ENCODE measurements at regions of chr2 and their contacts with region 1.

Region 1: DNA sequence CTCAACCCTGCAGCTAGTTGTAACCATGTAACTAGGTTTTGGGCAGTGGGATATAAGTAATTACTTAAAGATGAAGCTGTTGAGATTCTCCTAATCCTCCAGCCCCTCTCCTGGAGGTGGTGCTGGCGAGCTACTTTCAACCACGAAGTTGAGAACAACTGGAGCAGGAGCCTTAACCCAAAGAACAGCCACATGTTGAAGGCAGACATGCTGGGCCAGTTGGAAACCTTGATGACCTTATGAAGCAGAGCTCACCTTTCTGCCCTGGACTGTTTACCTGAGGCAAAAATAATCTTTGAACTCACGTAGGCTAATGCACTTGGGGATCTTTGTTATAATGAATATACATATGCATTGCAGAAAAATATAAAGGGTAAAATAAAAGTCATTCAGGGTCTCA is 89.6 kb upstream of the NPAS2 start:
- DNase-seq: peak; percentile 62
- ATAC-seq: peak; percentile 93
- H3K4me3 ChIP-seq: no peak overlapping the region
- H3K27ac ChIP-seq: no peak overlapping the region
- H3K4me1 ChIP-seq: peaks cover 6 to 10% of the 10 kb centered on the region in 2 experiments; a peak in 3 of 4 replicates
- H3K27me3 ChIP-seq: no peaks in the 10 kb centered on the region
- CTCF ChIP-seq: peak; percentile 76 to 83 (median 77)
- POLR2A ChIP-seq: no peak
- RAD21 ChIP-seq: peak; percentile 92

Region 2: DNA sequence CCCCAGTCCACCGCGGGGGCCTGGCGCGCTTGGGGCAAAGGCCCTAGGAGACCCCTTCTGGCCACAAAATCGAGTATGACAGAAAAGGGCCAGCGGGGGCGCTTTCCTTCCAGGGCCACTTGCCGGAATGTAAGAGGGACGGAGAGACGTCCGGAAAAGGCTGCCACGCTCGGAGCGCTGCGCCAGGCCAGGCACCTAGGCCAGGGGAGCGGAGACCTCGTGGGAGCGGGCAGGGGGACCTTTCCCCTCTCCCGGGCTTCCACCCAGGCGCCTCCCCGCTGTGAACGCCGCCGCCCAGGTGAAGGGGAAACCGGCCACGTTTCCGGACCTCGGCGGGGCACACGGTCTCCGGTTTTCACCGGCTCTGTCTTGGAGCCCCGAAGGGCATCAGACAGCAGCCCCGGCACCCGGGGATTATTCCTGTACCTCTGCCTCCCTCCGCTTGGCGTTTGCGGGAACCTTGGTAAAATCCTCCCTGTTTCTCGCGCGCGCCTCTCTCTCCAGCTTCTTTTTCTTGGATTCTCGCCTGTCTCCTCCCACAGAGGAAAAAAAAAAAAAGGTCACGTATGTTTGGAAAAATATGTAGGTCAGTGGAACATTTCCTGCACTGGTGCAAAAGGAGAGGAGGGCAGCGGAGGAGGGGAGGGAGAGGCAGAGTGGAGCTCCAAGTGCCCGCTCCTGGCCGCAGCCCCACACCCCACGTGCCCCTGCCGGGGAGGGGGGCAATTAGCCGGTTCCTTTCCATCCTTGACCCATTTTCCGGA is 88.4 kb after region 1 on chr2:
- CTCF ChIA-PET with region 1: no interaction called
- POLR2A ChIA-PET with region 1: no interaction called
- RAD21 ChIA-PET with region 1: no interaction called
- intact Hi-C with region 1: loop called (anchors 5 kb)
- DNase-seq: peak; percentile 10
- ATAC-seq: peak; percentile 58
- H3K4me3 ChIP-seq: peak overlapping the region; percentile 60 to 67
- H3K27ac ChIP-seq: peak overlapping the region; percentile 58
- H3K4me1 ChIP-seq: peaks cover 3 to 41% of the 10 kb centered on the region in 2 experiments; a peak in 3 of 4 replicates
- H3K27me3 ChIP-seq: no peaks in the 10 kb centered on the region
- CTCF ChIP-seq: peak; percentile 38 to 46 (median 46); a peak in 4 of 6 replicates
- POLR2A ChIP-seq: no peak
- RAD21 ChIP-seq: no peak

Region 3: GRCh38 chr2:100870652-100871531 is 140.5 kb after region 1 on chr2:
- CTCF ChIA-PET with region 1: interaction called, 7 read pairs
- POLR2A ChIA-PET with region 1: no interaction called
- RAD21 ChIA-PET with region 1: interaction called in 1 of 2 experiments, 3 read pairs
- intact Hi-C with region 1: loop called (anchors 5 kb)
- DNase-seq: no peak
- ATAC-seq: peak; percentile 72
- H3K4me3 ChIP-seq: no peak overlapping the region
- H3K27ac ChIP-seq: no peak overlapping the region
- H3K4me1 ChIP-seq: peaks cover 3 to 13% of the 10 kb centered on the region in 2 experiments; a peak in 3 of 4 replicates
- H3K27me3 ChIP-seq: no peaks in the 10 kb centered on the region
- CTCF ChIP-seq: peak; percentile 23 to 41 (median 39); a peak in 3 of 6 replicates
- POLR2A ChIP-seq: no peak
- RAD21 ChIP-seq: peak; percentile 20; the same call in 1 of the 2 replicates

Region 4: DNA sequence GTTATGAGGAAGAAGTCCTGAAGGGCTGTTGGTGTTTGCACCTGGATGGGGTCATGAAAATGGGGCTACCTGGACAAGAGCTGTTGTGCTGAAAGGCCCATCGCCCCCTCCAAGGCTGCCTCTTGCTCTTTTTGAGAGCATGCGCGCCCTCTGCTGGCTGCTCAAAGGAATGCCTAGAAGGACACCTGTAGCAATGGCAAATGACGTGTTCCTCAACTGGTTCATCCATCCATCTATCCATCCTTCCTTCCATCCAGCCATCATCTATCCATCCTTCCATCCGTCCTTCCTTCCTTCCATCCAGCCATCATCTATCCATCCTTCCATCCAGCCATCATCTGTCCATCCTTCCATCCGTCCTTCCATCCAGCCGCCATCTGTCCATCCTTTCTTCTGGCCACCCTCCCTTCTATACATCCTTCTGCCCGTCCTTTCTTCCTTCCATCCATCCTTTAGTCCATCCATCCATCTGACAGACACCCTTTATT is 254.6 kb after region 1 on chr2:
- CTCF ChIA-PET with region 1: interaction called, 25 read pairs
- POLR2A ChIA-PET with region 1: no interaction called
- RAD21 ChIA-PET with region 1: interaction called, 3 to 4 read pairs
- intact Hi-C with region 1: loop called (anchors 1 kb)
- DNase-seq: peak; percentile 64
- ATAC-seq: peak; percentile 86
- H3K4me3 ChIP-seq: no peak overlapping the region
- H3K27ac ChIP-seq: no peak overlapping the region
- H3K4me1 ChIP-seq: peaks cover 7 to 9% of the 10 kb centered on the region in 2 experiments
- H3K27me3 ChIP-seq: no peaks in the 10 kb centered on the region
- CTCF ChIP-seq: peak; percentile 83 to 87 (median 85)
- POLR2A ChIP-seq: no peak
- RAD21 ChIP-seq: peak; percentile 92

Region 5: GRCh38 chr2:101001691-101002561 is 271.6 kb after region 1 on chr2 and contains the start of gene RPL31:
- CTCF ChIA-PET with region 1: interaction called, 8 read pairs
- POLR2A ChIA-PET with region 1: interaction called, 15 read pairs
- RAD21 ChIA-PET with region 1: no interaction called
- intact Hi-C with region 1: no loop called
- DNase-seq: peak; percentile 91
- ATAC-seq: peak; percentile 86
- H3K4me3 ChIP-seq: peak within 1 kb of the TSS; percentile 66 to 89
- H3K27ac ChIP-seq: peak within 1 kb of the TSS; percentile 88
- H3K4me1 ChIP-seq: peaks cover 9 to 19% of the 10 kb centered on the region in 2 experiments
- H3K27me3 ChIP-seq: no peaks in the 10 kb centered on the region
- CTCF ChIP-seq: no peak
- POLR2A ChIP-seq: peak; percentile 97
- RAD21 ChIP-seq: no peak; the same call in 1 of the 2 replicates
- total RNA-seq, gene RPL31: 1,340 TPM

Region 6: GRCh38 chr2:101151141-101151858 is 421.0 kb after region 1 on chr2 and contains the start of gene TBC1D8:
- CTCF ChIA-PET with region 1: interaction called, 3 read pairs
- POLR2A ChIA-PET with region 1: no interaction called
- RAD21 ChIA-PET with region 1: no interaction called
- intact Hi-C with region 1: loop called (anchors 10 kb)
- DNase-seq: peak; percentile 49
- ATAC-seq: peak; percentile 91
- H3K4me3 ChIP-seq: peak within 1 kb of the TSS; percentile 72 to 80
- H3K27ac ChIP-seq: peak within 1 kb of the TSS; percentile 81; the same call in 1 of the 2 replicates
- H3K4me1 ChIP-seq: peaks cover 23 to 57% of the 10 kb centered on the region in 2 experiments
- H3K27me3 ChIP-seq: no peaks in the 10 kb centered on the region
- CTCF ChIP-seq: no peak
- POLR2A ChIP-seq: peak; percentile 81
- RAD21 ChIP-seq: 0 out of 2 replicates have a peak, but pooled peaks have one; percentile 3
- total RNA-seq, gene TBC1D8: 44.0 TPM